CD4-positive, alpha-beta T cell (primary cell): ENCODE measurements at regions of chr4 and their contacts with region 1.

Region 1: DNA sequence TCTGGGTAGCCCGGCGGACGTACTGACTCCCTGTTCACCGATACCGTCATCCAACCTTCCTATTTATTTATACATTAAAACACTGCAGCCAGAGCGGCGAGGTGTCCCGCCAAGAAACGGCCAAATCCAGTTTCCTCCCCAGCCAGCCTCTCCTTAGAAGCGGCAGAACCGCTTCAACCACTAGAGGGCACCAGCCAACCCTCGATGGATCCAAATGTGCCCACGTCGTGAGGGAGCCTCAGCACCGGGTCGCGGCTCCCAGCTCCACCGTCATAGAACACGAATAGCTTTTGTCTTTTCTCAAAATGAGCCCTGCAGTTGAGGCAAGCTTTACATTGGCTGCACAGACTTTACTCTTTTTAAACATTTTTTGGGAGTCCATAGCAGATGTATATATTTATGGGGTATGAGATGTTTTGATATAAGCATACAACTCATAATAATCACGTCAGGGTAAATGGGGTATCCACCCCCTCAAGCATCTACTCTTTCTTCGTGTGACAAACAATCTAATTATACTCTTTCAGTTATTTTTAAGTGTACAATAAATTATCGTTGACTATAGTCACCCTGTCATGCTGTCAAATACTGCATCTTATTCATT is 13.0 kb upstream of the HELT start:
- DNase-seq: peak; percentile 62 to 83 (median 68)
- ATAC-seq: peak; percentile 91
- H3K4me3 ChIP-seq: no peak overlapping the region
- H3K4me3 Mint-ChIP-seq: no peak overlapping the region
- H3K27ac ChIP-seq: no peak overlapping the region
- H3K27ac Mint-ChIP-seq: no peak overlapping the region
- H3K4me1 ChIP-seq: peaks cover 8% of the 10 kb centered on the region
- H3K4me1 Mint-ChIP-seq: peaks cover 6% of the 10 kb centered on the region
- H3K27me3 ChIP-seq: peaks cover 11 to 18% of the 10 kb centered on the region in 2 experiments
- H3K27me3 Mint-ChIP-seq: peaks cover 67% of the 10 kb centered on the region
- CTCF ChIP-seq: peak; percentile 97

Region 2: GRCh38 chr4:184514121-184514988 is 491.0 kb before region 1 on chr4:
- CTCF ChIA-PET with region 1: no interaction called
- POLR2A ChIA-PET with region 1: no interaction called
- intact Hi-C with region 1: no loop called
- DNase-seq: peak in 4 of 14 experiments; percentile 13 to 72 (median 56)
- ATAC-seq: peak; percentile 37
- H3K4me3 ChIP-seq: no peak overlapping the region
- H3K4me3 Mint-ChIP-seq: no peak overlapping the region
- H3K27ac ChIP-seq: no peak overlapping the region
- H3K27ac Mint-ChIP-seq: no peak overlapping the region
- H3K4me1 ChIP-seq: peaks cover 16% of the 10 kb centered on the region
- H3K4me1 Mint-ChIP-seq: peaks cover 24% of the 10 kb centered on the region
- H3K27me3 ChIP-seq: no peaks in the 10 kb centered on the region
- H3K27me3 Mint-ChIP-seq: no peaks in the 10 kb centered on the region
- CTCF ChIP-seq: no peak

Region 3: GRCh38 chr4:185096032-185096653 is 90.8 kb after region 1 on chr4:
- CTCF ChIA-PET with region 1: no interaction called
- POLR2A ChIA-PET with region 1: no interaction called
- intact Hi-C with region 1: loop called in 1 of 2 experiments (anchors 10 kb)
- DNase-seq: peak in 5 of 14 experiments; percentile 4 to 49 (median 36)
- ATAC-seq: no peak
- H3K4me3 ChIP-seq: no peak overlapping the region
- H3K4me3 Mint-ChIP-seq: no peak overlapping the region
- H3K27ac ChIP-seq: no peak overlapping the region
- H3K27ac Mint-ChIP-seq: no peak overlapping the region
- H3K4me1 ChIP-seq: no peaks in the 10 kb centered on the region
- H3K4me1 Mint-ChIP-seq: no peaks in the 10 kb centered on the region
- H3K27me3 ChIP-seq: peaks cover 11 to 15% of the 10 kb centered on the region in 2 experiments
- H3K27me3 Mint-ChIP-seq: peaks cover 47% of the 10 kb centered on the region
- CTCF ChIP-seq: peak; percentile 57

Region 4: DNA sequence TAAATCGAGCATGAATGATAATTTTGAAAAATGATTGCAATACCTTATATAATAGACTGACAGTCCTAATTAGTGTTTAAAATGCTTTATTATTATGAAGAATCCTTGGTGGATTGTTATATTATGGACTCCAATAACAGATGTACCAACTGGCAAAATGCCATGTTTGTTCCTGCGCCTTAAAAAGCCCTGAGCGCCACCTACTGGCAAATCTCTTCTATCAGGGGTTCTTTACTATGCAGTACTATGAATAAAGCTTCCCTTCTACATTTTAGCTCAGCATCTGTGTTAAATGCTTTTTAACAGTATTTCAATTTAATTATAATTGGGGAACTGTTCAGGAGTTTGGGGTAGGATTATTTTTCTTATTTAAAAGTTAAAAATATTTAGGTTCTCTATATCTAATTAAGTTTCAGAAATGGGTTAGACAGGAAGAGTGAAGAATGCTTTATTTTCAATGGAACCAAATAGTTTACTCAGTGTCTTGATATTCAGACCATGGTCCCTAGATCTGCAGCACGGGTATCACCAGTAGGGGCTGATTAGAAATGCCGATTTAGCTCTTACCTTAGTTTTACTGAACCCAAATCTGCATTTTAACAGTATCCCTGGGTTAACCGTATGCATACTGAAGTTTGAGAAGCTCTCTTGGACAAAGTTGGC is 178.4 kb after region 1 on chr4:
- CTCF ChIA-PET with region 1: no interaction called
- POLR2A ChIA-PET with region 1: no interaction called
- intact Hi-C with region 1: loop called (anchors 1 to 10 kb)
- DNase-seq: peak; percentile 54 to 91 (median 70)
- ATAC-seq: peak; percentile 67
- H3K4me3 ChIP-seq: no peak overlapping the region
- H3K4me3 Mint-ChIP-seq: no peak overlapping the region
- H3K27ac ChIP-seq: no peak overlapping the region
- H3K27ac Mint-ChIP-seq: no peak overlapping the region
- H3K4me1 ChIP-seq: peaks cover 13% of the 10 kb centered on the region
- H3K4me1 Mint-ChIP-seq: peaks cover 57% of the 10 kb centered on the region
- H3K27me3 ChIP-seq: no peaks in the 10 kb centered on the region
- H3K27me3 Mint-ChIP-seq: no peaks in the 10 kb centered on the region
- CTCF ChIP-seq: peak; percentile 93